ENCODE measurements at regions of chr15 and their contacts with region 1.

Region 1: DNA sequence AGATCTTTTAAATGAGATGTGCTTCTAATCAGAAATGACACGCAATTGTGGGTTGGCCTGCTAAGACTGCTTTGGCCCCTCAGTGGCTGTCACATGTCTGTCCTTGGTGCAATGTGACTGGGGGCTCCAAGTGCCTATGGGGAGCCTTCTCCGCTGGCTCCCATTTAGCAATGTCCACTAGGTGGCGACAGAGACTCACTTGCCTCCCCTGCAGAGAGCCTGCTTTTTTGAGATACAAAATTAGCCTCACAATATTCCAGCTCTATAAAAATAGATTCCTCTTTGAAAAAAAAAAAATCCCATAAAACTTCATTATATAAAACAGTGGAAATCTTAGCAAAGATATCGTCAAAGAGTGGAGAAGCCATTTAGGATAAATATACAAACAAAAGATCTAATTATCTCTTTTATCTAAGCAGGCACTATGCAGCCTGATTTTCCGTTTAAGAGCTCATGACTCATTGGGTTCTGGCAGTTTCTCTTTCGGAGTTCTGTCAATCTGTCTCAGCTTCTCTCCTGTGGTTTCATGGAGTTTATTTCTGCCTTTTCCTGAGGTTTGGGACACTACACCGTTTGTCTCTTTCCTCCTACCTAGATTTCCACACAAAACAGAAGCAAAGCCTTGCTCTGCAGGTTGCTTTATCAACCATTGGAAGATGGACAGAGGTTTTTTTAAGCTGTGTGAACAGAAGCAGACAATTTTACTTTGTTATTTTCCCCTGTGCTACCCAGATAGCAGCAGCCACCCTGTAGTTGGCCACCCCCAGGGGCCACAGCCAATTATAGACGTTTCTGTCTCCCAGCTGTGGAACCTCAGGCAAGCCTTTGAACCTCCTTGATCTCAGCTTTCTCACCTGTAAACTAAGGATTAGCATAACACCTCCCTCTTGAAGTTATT is 68.4 kb upstream of the TNFAIP8L3 start:
- DNase-seq: peak; percentile 69 to 81
- H3K4me3 ChIP-seq: peak overlapping the region; percentile 7 to 25
- H3K27ac ChIP-seq: peak overlapping the region; percentile 81 to 83
- H3K4me1 ChIP-seq: peaks cover 7 to 11% (median 9%) of the 10 kb centered on the region in 4 donors
- H3K27me3 ChIP-seq: no peaks in the 10 kb centered on the region
- CTCF ChIP-seq: peak; percentile 92 to 97

Region 2: GRCh38 chr15:51192521-51193280 is 29.6 kb after region 1 on chr15:
- intact Hi-C with region 1: loop called (anchors 1 kb)
- DNase-seq: peak; percentile 95
- H3K4me3 ChIP-seq: no peak overlapping the region
- H3K27ac ChIP-seq: peak overlapping the region; percentile 83
- H3K4me1 ChIP-seq: peaks cover 0 to 73% (median 51%) of the 10 kb centered on the region in 4 donors
- H3K27me3 ChIP-seq: no peaks in the 10 kb centered on the region
- CTCF ChIP-seq: peak; percentile 92 to 96

Region 3: DNA sequence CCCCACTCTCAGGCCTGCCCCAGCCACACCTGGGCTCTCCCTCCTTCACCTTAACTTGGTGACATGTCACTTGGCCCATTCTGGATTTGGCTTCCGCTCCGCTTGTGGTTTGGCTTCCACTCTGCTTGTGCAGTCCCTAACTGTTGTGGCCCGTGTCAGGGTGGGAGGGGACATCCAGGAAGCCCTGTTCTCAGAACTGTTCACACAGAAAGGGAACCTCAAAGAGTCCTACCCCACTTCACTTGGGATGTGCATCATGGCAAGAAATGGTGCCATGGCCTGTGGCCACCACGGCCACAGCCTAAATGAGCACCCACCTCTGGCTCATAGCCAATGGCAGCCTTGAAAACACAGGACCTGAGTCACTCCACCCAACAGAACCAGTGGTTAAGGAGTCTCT is 111.8 kb after region 1 on chr15:
- intact Hi-C with region 1: loop called (anchors 5 kb)
- DNase-seq: no peak
- H3K4me3 ChIP-seq: no peak overlapping the region
- H3K27ac ChIP-seq: no peak overlapping the region
- H3K4me1 ChIP-seq: no peaks in the 10 kb centered on the region
- H3K27me3 ChIP-seq: no peaks in the 10 kb centered on the region
- CTCF ChIP-seq: no peak

Measured in tibial artery (tissue), 4 donors.